K562 (cell line): ENCODE measurements at regions of chr14 and their contacts with region 1.

Region 1: GRCh38 chr14:49585803-49586672 is at the start of gene RPS29:
- DNase-seq: peak; percentile 80 to 97 (median 86)
- ATAC-seq: peak; percentile 83
- H3K4me3 ChIP-seq: peak within 1 kb of the TSS; percentile 82
- H3K27ac ChIP-seq: peak within 1 kb of the TSS; percentile 92
- H3K4me1 ChIP-seq: peaks cover 12% of the 10 kb centered on the region in 2 experiments; a peak in 4 of 5 replicates
- H3K27me3 ChIP-seq: no peaks in the 10 kb centered on the region
- CTCF ChIP-seq: no peak
- EP300 ChIP-seq: no peak
- POLR2A ChIP-seq: peak; percentile 99
- RAD21 ChIP-seq: no peak
- polyA plus RNA-seq, gene RPS29: 3,039 to 3,940 TPM

Region 2: DNA sequence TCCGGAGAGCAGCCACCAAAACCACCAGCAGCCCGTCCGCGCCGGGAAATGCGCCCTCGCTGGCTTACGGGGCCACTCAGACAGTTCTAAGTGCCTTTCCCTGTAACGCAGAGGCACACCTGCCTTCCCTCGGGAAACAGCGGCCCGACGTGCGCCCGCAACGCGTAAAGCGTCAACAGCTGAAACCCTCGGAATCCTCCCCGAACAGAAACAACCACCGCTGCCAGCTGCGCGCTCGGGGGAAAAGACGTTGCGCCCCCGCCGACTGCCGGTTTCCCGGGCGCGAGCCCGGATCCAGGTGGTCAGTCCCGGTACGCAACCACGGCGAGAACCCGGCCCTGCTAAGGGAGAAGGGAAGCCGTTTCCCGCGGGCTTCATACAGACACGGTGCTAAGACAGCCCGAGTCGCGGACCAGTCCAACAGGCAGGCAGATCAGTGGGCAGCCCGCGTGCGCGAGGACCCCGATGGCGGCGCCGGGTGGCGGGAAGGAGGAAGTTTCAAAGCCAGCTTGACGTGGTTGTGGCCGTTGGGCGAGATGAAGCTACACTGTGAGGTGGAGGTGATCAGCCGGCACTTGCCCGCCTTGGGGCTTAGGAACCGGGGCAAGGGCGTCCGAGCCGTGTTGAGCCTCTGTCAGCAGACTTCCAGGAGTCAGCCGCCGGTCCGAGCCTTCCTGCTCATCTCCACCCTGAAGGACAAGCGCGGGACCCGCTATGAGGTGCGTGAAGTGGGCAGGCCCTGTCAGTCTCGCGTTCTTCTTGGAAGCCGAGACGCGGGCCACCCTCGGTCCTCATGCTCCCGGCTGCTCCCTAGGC is 12.7 kb after region 1 on chr14 and contains the start of gene LRR1:
- CTCF ChIA-PET with region 1: interaction called, 6 read pairs
- POLR2A ChIA-PET with region 1: interaction called, 14 read pairs
- in situ Hi-C with region 1: no loop called
- intact Hi-C with region 1: loop called (anchors 1 kb)
- DNase-seq: peak; percentile 59 to 81 (median 64)
- ATAC-seq: peak; percentile 74
- H3K4me3 ChIP-seq: peak within 1 kb of the TSS; percentile 53
- H3K27ac ChIP-seq: peak within 1 kb of the TSS; percentile 96
- H3K4me1 ChIP-seq: peaks cover 12 to 25% of the 10 kb centered on the region in 2 experiments
- H3K27me3 ChIP-seq: no peaks in the 10 kb centered on the region
- CTCF ChIP-seq: no peak
- EP300 ChIP-seq: peak; percentile 16; the same call in 1 of the 2 replicates
- POLR2A ChIP-seq: peak; percentile 95
- RAD21 ChIP-seq: no peak
- polyA plus RNA-seq, gene LRR1: 56.5 to 58.1 TPM

Region 3: GRCh38 chr14:49641697-49642129 is 55.7 kb after region 1 on chr14:
- CTCF ChIA-PET with region 1: no interaction called
- POLR2A ChIA-PET with region 1: no interaction called
- in situ Hi-C with region 1: no loop called
- intact Hi-C with region 1: no loop called
- DNase-seq: peak in 1 of 4 experiments; percentile 13
- ATAC-seq: peak; percentile 58
- H3K4me3 ChIP-seq: no peak overlapping the region
- H3K27ac ChIP-seq: peak overlapping the region; percentile 23; the same call in 1 of the 3 replicates
- H3K4me1 ChIP-seq: peaks cover 0 to 8% of the 10 kb centered on the region in 2 experiments; a peak in 3 of 5 replicates
- H3K27me3 ChIP-seq: no peaks in the 10 kb centered on the region
- CTCF ChIP-seq: no peak
- EP300 ChIP-seq: no peak
- POLR2A ChIP-seq: no peak; the same call in 1 of the 2 replicates
- RAD21 ChIP-seq: no peak

Region 4: DNA sequence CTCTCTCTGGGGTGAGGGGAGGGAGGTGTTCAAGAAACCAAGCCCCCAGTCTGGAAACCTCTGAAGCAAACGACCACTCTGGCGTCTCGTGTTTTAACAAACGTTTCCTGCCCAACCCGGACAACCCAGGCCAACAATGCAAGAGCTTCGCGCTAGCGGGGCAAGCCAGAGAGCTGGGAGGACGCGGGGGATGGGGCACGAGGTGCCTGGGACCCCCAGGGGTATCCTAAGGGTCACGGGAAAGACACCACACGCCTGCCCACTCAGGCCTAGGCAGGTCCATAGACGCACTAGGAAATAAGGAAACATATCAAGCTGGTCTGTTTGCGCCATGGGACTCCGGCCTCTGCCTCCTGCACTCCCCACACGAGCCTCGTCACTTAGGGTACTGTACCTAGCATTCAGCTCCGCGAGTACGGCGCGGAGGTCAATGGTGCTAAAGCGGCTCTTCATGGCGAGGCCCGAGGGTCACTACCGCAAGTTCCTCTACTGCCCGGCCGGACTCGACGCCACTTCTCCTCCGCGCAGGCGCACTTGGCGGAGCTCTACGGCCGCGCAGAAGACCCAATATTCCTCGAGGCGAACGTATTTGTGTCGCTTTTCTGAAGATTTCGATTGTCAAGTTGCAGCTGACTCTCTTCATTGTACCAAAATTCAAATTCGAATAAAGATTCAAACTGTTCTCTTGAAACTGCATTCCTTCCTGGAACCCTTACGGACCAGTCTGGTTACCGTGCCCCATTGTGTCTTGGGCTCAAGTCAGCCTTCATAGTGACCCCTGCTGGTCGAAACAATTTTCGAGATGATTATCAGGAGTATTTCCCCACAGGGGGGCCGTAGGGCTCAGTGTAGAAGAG is 266.5 kb after region 1 on chr14 and contains the start of gene NEMF:
- CTCF ChIA-PET with region 1: no interaction called
- POLR2A ChIA-PET with region 1: no interaction called
- in situ Hi-C with region 1: no loop called
- intact Hi-C with region 1: loop called (anchors 5 kb)
- DNase-seq: peak; percentile 65 to 89 (median 73)
- ATAC-seq: peak; percentile 88
- H3K4me3 ChIP-seq: peak within 1 kb of the TSS; percentile 84
- H3K27ac ChIP-seq: peak within 1 kb of the TSS; percentile 85
- H3K4me1 ChIP-seq: peaks cover 2 to 4% of the 10 kb centered on the region in 2 experiments; a peak in 4 of 5 replicates
- H3K27me3 ChIP-seq: no peaks in the 10 kb centered on the region; a peak in 1 of 5 replicates
- CTCF ChIP-seq: peak; percentile 73 to 81 (median 74)
- EP300 ChIP-seq: no peak
- POLR2A ChIP-seq: peak; percentile 92
- RAD21 ChIP-seq: peak in 1 of 2 experiments; percentile 31; a peak in 2 of 4 replicates
- polyA plus RNA-seq, gene NEMF: 38.8 to 73.2 TPM